Left ventricle myocardium superior (tissue), 1 donor: ENCODE measurements at regions of chr20 and their contacts with region 1.

Region 1: GRCh38 chr20:63381807-63382322 is 20.7 kb upstream of the CHRNA4 start:
- DNase-seq: peak; percentile 59
- ATAC-seq: peak; percentile 73

Region 2: GRCh38 chr20:63309261-63310071 is 72.4 kb before region 1 on chr20:
- intact Hi-C with region 1: loop called (anchors 5 kb)
- DNase-seq: peak; percentile 64
- ATAC-seq: peak; percentile 69